A673 (cell line): ENCODE measurements at regions of chr12 and their contacts with region 1.

Region 1: DNA sequence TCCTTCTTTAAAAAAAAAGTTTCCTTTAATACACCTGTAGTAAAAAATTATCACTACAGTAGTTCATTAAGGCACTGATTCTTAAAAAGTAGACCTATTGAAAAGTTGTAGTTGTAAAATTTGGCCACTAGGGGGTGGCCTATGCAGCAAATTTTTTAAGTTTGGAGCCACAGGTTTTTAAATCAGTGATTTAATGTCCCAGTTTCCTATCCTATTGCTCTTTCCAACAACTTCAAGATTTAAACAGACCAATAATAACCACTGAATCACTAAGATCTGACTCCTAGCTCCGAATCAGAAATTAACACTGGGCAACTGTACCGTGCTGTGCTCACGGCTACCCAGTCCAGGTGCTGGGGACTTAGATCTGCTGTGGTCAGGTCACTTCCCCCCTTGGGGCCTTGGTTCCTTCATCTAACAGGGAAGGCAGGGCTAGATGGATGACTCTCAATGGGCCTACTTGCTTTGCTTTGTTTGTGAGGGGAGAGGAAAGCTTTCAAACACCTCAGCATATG is 279.3 kb downstream of the MED13L start:
- DNase-seq: peak; percentile 75
- H3K4me3 ChIP-seq: no peak overlapping the region
- H3K27ac ChIP-seq: no peak overlapping the region
- H3K4me1 ChIP-seq: peaks cover 13% of the 10 kb centered on the region
- H3K27me3 ChIP-seq: no peaks in the 10 kb centered on the region
- CTCF ChIP-seq: peak; percentile 83

Region 2: DNA sequence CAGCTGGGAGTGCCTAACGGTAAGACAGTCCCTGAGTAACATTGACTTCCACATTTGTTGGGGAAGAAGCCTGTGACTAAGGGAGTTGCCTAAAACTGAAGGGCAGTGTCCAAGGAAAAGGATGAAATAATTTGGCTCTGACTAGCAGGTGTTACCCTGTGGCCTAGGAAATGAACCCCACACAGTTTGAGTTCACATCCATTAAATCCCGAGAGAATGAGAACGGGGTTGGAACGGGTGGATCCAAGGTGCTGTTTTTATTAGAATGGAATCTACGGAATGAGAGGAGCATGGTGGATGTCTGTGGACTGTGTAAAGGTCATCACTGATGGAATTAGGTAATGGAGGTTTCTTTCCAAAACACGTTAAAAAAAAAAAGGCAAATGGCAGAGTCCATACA is 44.7 kb before region 1 on chr12:
- CTCF ChIA-PET with region 1: no interaction called
- POLR2A ChIA-PET with region 1: no interaction called
- intact Hi-C with region 1: no loop called
- DNase-seq: no peak
- H3K4me3 ChIP-seq: no peak overlapping the region
- H3K27ac ChIP-seq: no peak overlapping the region
- H3K4me1 ChIP-seq: peaks cover 4% of the 10 kb centered on the region
- H3K27me3 ChIP-seq: no peaks in the 10 kb centered on the region
- CTCF ChIP-seq: no peak

Region 3: GRCh38 chr12:116236148-116236731 is 238.1 kb after region 1 on chr12:
- CTCF ChIA-PET with region 1: interaction called, 3 read pairs
- POLR2A ChIA-PET with region 1: no interaction called
- intact Hi-C with region 1: loop called (anchors 2 kb)
- DNase-seq: peak; percentile 76
- H3K4me3 ChIP-seq: no peak overlapping the region
- H3K27ac ChIP-seq: no peak overlapping the region
- H3K4me1 ChIP-seq: peaks cover 34% of the 10 kb centered on the region
- H3K27me3 ChIP-seq: no peaks in the 10 kb centered on the region
- CTCF ChIP-seq: peak; percentile 87

Region 4: GRCh38 chr12:116277393-116278278 is 279.5 kb after region 1 on chr12 and contains the start of gene MED13L:
- CTCF ChIA-PET with region 1: interaction called, 9 read pairs
- POLR2A ChIA-PET with region 1: no interaction called
- intact Hi-C with region 1: loop called (anchors 5 kb)
- DNase-seq: peak; percentile 94
- H3K4me3 ChIP-seq: peak within 1 kb of the TSS; percentile 67
- H3K27ac ChIP-seq: peak within 1 kb of the TSS; percentile 82
- H3K4me1 ChIP-seq: peaks cover 24% of the 10 kb centered on the region
- H3K27me3 ChIP-seq: no peaks in the 10 kb centered on the region
- CTCF ChIP-seq: 0 out of 2 replicates have a peak, but pooled peaks have one; percentile 18
- total RNA-seq, gene MED13L: 88.0 and 94.1 TPM in 2 replicates

Region 5: GRCh38 chr12:116599285-116600136 is 601.3 kb after region 1 on chr12:
- CTCF ChIA-PET with region 1: no interaction called
- POLR2A ChIA-PET with region 1: no interaction called
- intact Hi-C with region 1: loop called (anchors 5 kb)
- DNase-seq: peak; percentile 83
- H3K4me3 ChIP-seq: no peak overlapping the region
- H3K27ac ChIP-seq: no peak overlapping the region
- H3K4me1 ChIP-seq: peaks cover 37% of the 10 kb centered on the region
- H3K27me3 ChIP-seq: no peaks in the 10 kb centered on the region
- CTCF ChIP-seq: peak; percentile 63

Region 6: GRCh38 chr12:116697305-116697704 is 699.1 kb after region 1 on chr12:
- CTCF ChIA-PET with region 1: interaction called, 4 read pairs
- POLR2A ChIA-PET with region 1: no interaction called
- intact Hi-C with region 1: loop called (anchors 5 kb)
- DNase-seq: peak; percentile 53
- H3K4me3 ChIP-seq: no peak overlapping the region
- H3K27ac ChIP-seq: no peak overlapping the region
- H3K4me1 ChIP-seq: peaks cover 14% of the 10 kb centered on the region
- H3K27me3 ChIP-seq: no peaks in the 10 kb centered on the region
- CTCF ChIP-seq: peak; percentile 44

Region 7: DNA sequence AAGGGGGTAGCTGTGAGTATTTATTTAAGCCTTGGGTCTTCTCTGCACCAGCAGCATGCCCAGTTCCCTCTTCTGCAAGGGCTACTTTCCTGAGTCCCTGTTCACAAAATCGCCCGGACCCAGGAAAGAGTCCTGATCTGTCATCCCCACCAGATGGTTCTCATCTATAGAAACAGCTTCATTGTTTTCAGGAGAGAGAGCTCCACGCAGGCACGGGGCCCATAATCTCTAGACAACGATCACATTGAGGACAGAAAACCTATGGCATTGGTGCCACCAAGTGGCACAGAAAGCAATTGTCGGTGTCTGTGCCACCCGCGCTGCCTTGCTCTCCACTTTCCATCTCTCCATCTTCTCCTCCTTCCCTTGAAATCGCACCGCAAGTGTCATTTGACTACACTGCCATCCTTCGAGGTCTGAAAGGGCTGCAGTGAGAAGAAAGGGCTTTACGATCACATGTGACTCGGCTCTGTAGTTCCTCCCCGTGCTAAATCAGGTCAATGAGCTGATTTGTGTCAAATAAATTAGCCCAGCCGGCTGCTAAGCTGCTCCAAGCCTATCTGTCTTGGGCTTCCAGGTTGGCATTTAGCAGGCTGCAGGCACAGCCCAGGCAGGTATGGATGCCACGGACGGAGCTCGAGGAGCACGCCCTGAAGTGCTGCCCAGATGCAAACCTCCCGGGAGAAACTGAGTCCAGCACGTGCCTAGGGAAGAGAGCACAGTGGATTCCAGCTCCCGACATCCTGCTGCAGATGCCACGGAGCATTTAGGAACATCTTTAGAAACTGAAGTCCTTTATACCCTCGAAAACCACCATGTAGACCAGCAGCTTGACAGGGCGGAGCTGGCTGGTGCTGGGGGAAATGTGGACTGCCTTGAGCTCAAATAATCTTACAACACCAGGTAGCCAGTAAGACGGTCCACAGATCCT is 710.9 kb after region 1 on chr12:
- CTCF ChIA-PET with region 1: interaction called, 4 read pairs
- POLR2A ChIA-PET with region 1: no interaction called
- intact Hi-C with region 1: loop called (anchors 5 kb)
- DNase-seq: peak; percentile 88
- H3K4me3 ChIP-seq: peak overlapping the region; percentile 16
- H3K27ac ChIP-seq: no peak overlapping the region
- H3K4me1 ChIP-seq: peaks cover 23% of the 10 kb centered on the region
- H3K27me3 ChIP-seq: no peaks in the 10 kb centered on the region
- CTCF ChIP-seq: peak; percentile 80